Esophagus muscularis mucosa (tissue), 4 donors: ENCODE measurements at regions of chr17 and their contacts with region 1.

Region 1: DNA sequence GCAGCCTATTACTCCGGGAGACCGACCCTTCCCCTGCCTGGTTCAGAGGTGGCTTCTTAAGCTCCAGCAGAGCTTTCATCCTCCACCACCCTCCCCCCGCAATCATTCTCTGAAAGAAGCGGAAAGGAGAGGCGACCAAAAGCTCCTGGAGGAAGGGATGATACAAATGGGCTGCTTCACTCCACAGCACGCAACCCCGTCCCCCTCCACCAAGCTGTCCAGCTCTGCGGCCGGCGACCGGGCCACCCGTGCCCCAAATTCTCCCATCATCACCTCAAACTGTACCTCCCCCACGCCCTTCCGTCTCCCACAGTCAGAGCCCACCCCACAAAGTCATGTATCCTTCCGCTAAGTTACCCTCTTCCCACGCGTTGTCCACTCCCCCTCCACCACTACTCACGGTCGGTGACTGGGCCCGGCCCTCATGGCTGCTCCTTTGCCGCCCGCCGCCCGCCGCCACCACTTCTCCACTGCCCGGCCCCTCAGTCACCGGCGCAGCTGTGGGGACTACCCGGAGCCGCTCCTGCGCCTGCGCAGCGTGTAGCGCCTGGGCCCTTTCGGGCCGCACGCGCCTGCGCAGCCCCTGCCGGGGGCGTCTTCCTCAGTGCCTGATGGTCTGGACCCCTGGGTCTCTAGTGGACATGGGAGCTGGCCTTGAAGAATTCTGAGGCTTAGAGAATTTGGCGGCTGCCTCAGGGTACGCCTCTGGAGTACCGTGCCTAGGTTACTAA is at the start of gene FAM222B:
- DNase-seq: no peak
- H3K4me3 ChIP-seq: peak within 1 kb of the TSS; percentile 75 to 97 (median 83)
- H3K27ac ChIP-seq: peak within 1 kb of the TSS; percentile 75 to 88 (median 83)
- H3K4me1 ChIP-seq: peaks cover 8 to 34% (median 25%) of the 10 kb centered on the region in 4 donors
- H3K27me3 ChIP-seq: no peaks in the 10 kb centered on the region
- CTCF ChIP-seq: peak in 1 of 3 experiments; percentile 39
- EP300 ChIP-seq: no peak
- POLR2A ChIP-seq: peak; percentile 69
- total RNA-seq, gene FAM222B: 15.9 to 48.1 (median 30.3) TPM

Region 2: DNA sequence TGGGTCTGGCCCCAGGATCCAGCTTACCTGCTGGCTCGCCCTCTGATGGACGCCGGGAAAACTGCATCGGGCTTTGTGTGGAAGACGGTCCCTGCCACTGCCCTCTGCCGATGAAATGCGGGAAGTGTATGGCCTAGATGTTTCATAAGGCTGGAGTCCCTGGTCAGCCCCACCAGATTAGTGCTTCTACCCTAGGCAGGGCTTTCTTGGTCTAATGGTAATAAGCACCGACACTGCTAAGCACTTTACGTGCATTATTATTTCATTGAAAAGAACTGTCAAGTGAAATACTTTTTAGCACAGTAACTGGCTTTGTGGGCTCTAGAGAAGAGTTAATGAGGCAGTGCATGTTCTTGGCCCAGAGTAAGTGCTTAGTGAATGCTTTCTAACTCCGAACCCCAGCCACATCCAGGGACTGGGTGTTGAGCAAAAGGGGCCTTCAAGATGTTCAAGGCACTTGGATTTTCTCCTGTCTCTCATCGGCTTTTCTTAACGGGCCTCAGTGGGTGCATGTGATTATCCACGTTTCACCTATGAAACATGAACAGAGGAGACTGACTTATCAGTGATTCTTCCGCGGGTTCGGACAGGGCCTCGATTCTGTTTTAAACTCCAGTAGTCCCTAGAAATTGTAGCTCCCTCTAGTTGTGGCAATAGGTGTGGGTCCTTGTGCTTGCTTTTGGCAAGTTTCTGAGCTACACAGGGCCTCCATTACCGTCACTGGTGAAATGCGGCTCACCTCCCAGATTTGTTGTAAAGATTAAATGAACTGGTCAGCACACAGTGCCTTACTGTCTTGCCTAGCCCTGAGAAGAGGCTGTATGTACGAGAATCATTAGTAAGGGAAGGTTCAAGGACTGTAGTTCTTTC is 92.0 kb before region 1 on chr17:
- intact Hi-C with region 1: no loop called
- DNase-seq: peak; percentile 98
- H3K4me3 ChIP-seq: no peak overlapping the region
- H3K27ac ChIP-seq: peak overlapping the region in 3 of 4 donors; percentile 13 to 60 (median 43)
- H3K4me1 ChIP-seq: peaks cover 25 to 41% (median 37%) of the 10 kb centered on the region in 4 donors
- H3K27me3 ChIP-seq: no peaks in the 10 kb centered on the region
- CTCF ChIP-seq: peak in 2 of 3 experiments; percentile 100
- EP300 ChIP-seq: no peak
- POLR2A ChIP-seq: no peak

Region 3: DNA sequence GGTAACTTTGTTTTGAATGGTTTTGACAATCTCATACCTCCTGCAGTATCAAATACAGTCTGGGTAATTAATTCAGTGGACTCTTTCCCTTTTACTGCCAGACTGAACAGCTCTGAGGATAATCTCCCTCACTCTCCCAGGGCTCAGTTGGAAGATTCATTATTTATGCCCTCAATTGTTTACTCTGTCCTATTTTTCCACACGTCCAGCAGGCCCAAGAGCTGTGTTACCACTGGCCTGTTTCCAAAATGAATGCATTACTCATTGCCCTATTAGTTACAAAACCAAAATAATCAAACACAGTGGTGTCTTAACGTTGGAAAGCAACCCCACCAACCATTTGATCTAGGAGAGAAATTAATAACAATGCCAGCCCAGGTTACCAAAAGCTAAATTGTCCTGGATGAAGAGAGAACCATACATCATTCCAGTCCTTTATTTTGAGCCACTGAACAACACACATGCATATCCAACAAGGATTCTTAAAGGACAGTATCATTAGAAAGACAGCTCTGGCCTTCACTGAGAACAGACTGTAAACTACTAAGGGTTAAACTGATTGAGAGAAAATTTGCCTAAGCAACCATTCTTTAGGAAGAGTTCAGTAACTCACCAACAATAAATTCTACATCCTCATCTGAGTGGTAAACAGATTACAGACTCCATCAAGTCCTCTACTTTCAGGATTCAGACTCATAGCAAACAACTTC is 34.4 kb before region 1 on chr17:
- intact Hi-C with region 1: loop called (anchors 5 kb)
- DNase-seq: no peak
- H3K4me3 ChIP-seq: peak overlapping the region; percentile 2 to 39 (median 16)
- H3K27ac ChIP-seq: peak overlapping the region; percentile 89 to 96 (median 94)
- H3K4me1 ChIP-seq: peaks cover 38 to 80% (median 64%) of the 10 kb centered on the region in 4 donors
- H3K27me3 ChIP-seq: no peaks in the 10 kb centered on the region
- CTCF ChIP-seq: no peak
- EP300 ChIP-seq: no peak
- POLR2A ChIP-seq: no peak

Region 4: GRCh38 chr17:29190039-29190438 is 347.6 kb after region 1 on chr17:
- intact Hi-C with region 1: no loop called
- DNase-seq: no peak
- H3K4me3 ChIP-seq: no peak overlapping the region
- H3K27ac ChIP-seq: no peak overlapping the region
- H3K4me1 ChIP-seq: no peaks in the 10 kb centered on the region
- H3K27me3 ChIP-seq: no peaks in the 10 kb centered on the region
- CTCF ChIP-seq: no peak
- EP300 ChIP-seq: no peak
- POLR2A ChIP-seq: no peak